ENCODE measurements at regions of chr2 and their contacts with region 1.

Region 1: GRCh38 chr2:27174316-27175040 is 25.7 kb downstream of the TCF23 start:
- DNase-seq: no peak
- H3K4me3 ChIP-seq: no peak overlapping the region
- H3K27ac ChIP-seq: no peak overlapping the region
- H3K4me1 ChIP-seq: peaks cover 3 to 5% of the 10 kb centered on the region in 2 experiments; a peak in 3 of 4 replicates
- H3K27me3 ChIP-seq: no peaks in the 10 kb centered on the region
- CTCF ChIP-seq: no peak
- EP300 ChIP-seq: no peak
- RAD21 ChIP-seq: no peak

Region 2: DNA sequence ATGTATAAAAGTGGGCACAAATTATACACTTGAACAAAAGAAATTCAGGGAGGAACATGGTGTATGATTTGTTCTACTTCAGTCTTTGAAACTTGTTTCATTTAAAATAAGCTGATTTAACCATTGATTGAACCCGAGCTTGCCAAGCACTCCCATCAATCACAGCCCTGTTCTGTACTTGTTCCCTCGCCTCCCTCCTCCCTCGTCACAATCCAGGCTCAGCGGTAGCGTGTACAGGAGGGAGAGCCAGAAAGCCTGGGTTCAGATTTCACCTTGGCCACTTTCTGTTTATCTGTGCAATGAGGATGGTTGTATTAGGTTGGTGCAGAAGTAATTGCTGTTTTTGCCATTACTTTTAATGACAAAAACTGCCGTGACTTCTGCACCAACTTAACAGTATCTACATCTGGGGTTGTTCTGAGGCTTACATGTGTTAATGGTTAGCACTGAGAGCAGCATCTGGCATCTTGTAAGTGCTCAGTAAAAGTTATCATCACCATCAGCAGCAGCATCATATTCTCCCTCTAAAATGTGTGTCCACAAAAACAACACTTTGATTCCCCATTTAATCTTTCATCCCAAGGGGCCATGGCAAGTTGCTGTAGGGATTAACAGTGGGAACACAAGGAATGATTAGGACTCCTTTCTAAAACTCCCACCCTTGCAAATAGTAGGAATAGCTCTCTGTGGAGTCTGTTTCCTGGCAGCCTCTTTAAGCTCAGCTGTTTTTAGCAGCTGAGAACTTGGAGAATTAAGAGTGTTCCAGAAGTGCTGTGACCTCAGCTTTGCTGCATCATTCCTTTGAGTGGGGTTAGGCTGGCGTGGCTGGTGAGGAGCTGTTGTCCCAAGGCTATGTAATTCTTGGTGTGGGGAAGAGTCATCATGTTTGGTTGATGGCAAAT is 321.8 kb before region 1 on chr2:
- CTCF ChIA-PET with region 1: no interaction called
- POLR2A ChIA-PET with region 1: no interaction called
- DNase-seq: peak; percentile 81
- H3K4me3 ChIP-seq: peak overlapping the region in 1 of 2 experiments; percentile 10; a peak in 1 of 4 replicates
- H3K27ac ChIP-seq: peak overlapping the region in 1 of 2 experiments; percentile 94; a peak in 2 of 4 replicates
- H3K4me1 ChIP-seq: peaks cover 0 to 40% of the 10 kb centered on the region in 2 experiments; a peak in 3 of 4 replicates
- H3K27me3 ChIP-seq: peaks cover 62% of the 10 kb centered on the region
- CTCF ChIP-seq: no peak
- EP300 ChIP-seq: peak in 1 of 2 experiments; percentile 85; a peak in 2 of 4 replicates
- RAD21 ChIP-seq: no peak; the same call in 1 of the 2 replicates

Region 3: GRCh38 chr2:27095745-27096651 is 78.5 kb before region 1 on chr2:
- CTCF ChIA-PET with region 1: interaction called, 31 read pairs
- POLR2A ChIA-PET with region 1: interaction called, 3 read pairs
- DNase-seq: peak; percentile 91
- H3K4me3 ChIP-seq: peak overlapping the region in 1 of 2 experiments; percentile 43; a peak in 2 of 4 replicates
- H3K27ac ChIP-seq: peak overlapping the region in 1 of 2 experiments; percentile 92; a peak in 2 of 4 replicates
- H3K4me1 ChIP-seq: peaks cover 4 to 21% of the 10 kb centered on the region in 2 experiments; a peak in 2 of 4 replicates
- H3K27me3 ChIP-seq: no peaks in the 10 kb centered on the region
- CTCF ChIP-seq: no peak
- EP300 ChIP-seq: no peak
- RAD21 ChIP-seq: peak; percentile 35

Region 4: GRCh38 chr2:27133905-27134780 is 40.3 kb before region 1 on chr2 and contains the start of gene PREB:
- CTCF ChIA-PET with region 1: interaction called, 43 read pairs
- POLR2A ChIA-PET with region 1: interaction called, 4 read pairs
- DNase-seq: peak; percentile 100
- H3K4me3 ChIP-seq: peak within 1 kb of the TSS; percentile 94 to 97
- H3K27ac ChIP-seq: peak within 1 kb of the TSS; percentile 55 to 71; a peak in 3 of 4 replicates
- H3K4me1 ChIP-seq: peaks cover 7 to 14% of the 10 kb centered on the region in 2 experiments; a peak in 3 of 4 replicates
- H3K27me3 ChIP-seq: 0 out of 2 replicates have a peak, but pooled peaks cover 1% of the 10 kb centered on the region
- CTCF ChIP-seq: peak; percentile 56
- EP300 ChIP-seq: no peak
- RAD21 ChIP-seq: peak; percentile 51
- polyA plus RNA-seq, gene PREB: 47.9 and 51.3 TPM in 2 replicates

Region 5: DNA sequence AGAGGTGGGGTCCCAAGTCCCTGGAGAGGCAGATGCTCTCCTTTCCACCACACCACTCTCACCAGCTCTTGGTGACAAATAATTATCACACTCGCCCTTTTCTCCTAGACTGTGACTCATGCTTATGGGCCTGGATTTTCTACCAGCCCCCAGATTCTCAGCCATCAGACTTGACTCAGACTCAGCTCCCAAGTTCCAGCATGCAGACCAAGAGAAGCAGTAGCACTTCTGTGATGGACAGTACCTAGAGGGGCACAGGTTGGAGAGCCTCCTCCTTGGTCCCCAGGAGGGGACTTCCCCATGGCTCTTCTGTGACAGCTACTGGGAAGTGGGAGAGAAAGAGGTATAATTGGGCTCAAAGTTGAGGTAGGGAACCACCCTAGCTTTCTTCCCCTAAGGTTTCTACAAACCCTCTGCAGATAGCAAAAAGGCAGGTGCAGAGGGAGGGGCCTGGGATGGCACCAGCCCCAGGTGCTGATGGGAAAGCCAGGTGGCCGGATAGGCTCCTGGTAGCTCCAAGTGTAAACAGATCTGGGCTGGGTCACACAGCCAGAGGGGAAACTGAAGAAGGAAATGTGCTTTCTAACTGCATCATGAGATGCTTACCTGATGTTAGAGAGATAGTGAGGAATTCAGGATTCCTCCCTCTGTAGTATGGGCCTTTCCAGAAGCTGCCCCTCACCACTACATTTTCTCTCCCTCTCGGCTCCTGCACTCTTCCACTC is 21.5 kb before region 1 on chr2:
- CTCF ChIA-PET with region 1: interaction called, 58 read pairs
- POLR2A ChIA-PET with region 1: no interaction called
- DNase-seq: no peak
- H3K4me3 ChIP-seq: no peak overlapping the region
- H3K27ac ChIP-seq: no peak overlapping the region
- H3K4me1 ChIP-seq: no peaks in the 10 kb centered on the region
- H3K27me3 ChIP-seq: peaks cover 4% of the 10 kb centered on the region; the same call in 1 of the 2 replicates
- CTCF ChIP-seq: no peak
- EP300 ChIP-seq: no peak
- RAD21 ChIP-seq: no peak

Region 6: GRCh38 chr2:27185331-27186026 is 11.0 kb after region 1 on chr2:
- CTCF ChIA-PET with region 1: interaction called, 57 read pairs
- POLR2A ChIA-PET with region 1: no interaction called
- DNase-seq: no peak
- H3K4me3 ChIP-seq: no peak overlapping the region
- H3K27ac ChIP-seq: peak overlapping the region in 1 of 2 experiments; percentile 46; a peak in 2 of 4 replicates
- H3K4me1 ChIP-seq: peaks cover 0 to 26% of the 10 kb centered on the region in 2 experiments; a peak in 3 of 4 replicates
- H3K27me3 ChIP-seq: no peaks in the 10 kb centered on the region
- CTCF ChIP-seq: no peak
- EP300 ChIP-seq: no peak
- RAD21 ChIP-seq: no peak

Region 7: DNA sequence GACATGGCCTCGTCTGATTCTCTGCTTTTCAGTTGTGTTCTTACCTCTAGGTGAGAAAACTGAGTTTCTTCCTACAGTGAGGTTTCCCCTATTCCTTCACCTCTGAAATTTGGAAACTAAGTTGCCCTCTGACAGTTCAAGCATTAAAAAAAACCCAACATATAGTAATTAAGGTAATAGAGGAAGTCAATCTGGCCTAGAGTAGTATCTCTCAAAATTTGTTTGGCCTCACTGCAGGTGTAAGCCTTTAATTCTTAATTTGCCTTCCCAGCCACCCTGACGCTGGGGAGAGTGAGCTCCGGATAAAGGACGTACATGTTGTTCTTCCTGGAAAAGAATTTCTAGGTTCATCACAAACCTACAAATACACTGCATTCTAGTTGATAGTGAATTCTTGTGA is 44.1 kb after region 1 on chr2:
- CTCF ChIA-PET with region 1: no interaction called
- POLR2A ChIA-PET with region 1: no interaction called
- DNase-seq: no peak
- H3K4me3 ChIP-seq: no peak overlapping the region
- H3K27ac ChIP-seq: no peak overlapping the region
- H3K4me1 ChIP-seq: peaks cover 4 to 15% of the 10 kb centered on the region in 2 experiments; a peak in 3 of 4 replicates
- H3K27me3 ChIP-seq: no peaks in the 10 kb centered on the region
- CTCF ChIP-seq: no peak
- EP300 ChIP-seq: no peak
- RAD21 ChIP-seq: no peak